Ovary (tissue), 10 donors: ENCODE measurements at regions of chr3 and their contacts with region 1.

Region 1: GRCh38 chr3:108328821-108329486 is 32.6 kb downstream of the HHLA2 start:
- DNase-seq: no peak
- H3K4me3 ChIP-seq: no peak overlapping the region
- H3K27ac ChIP-seq: no peak overlapping the region
- H3K4me1 ChIP-seq: no peaks in the 10 kb centered on the region
- H3K27me3 ChIP-seq: no peaks in the 10 kb centered on the region
- CTCF ChIP-seq: no peak
- EP300 ChIP-seq: no peak
- POLR2A ChIP-seq: no peak

Region 2: GRCh38 chr3:107212618-107213017 is 1116.3 kb before region 1 on chr3:
- intact Hi-C with region 1: loop called in 1 of 4 experiments (anchors 5 kb)
- DNase-seq: no peak
- H3K4me3 ChIP-seq: no peak overlapping the region
- H3K27ac ChIP-seq: peak overlapping the region in 1 of 2 donors; percentile 51
- H3K4me1 ChIP-seq: peaks cover 14% of the 10 kb centered on the region
- H3K27me3 ChIP-seq: no peaks in the 10 kb centered on the region
- CTCF ChIP-seq: no peak
- EP300 ChIP-seq: no peak
- POLR2A ChIP-seq: no peak

Region 3: GRCh38 chr3:108897883-108898282 is 568.9 kb after region 1 on chr3:
- intact Hi-C with region 1: no loop called
- DNase-seq: no peak
- H3K4me3 ChIP-seq: no peak overlapping the region
- H3K27ac ChIP-seq: no peak overlapping the region
- H3K4me1 ChIP-seq: no peaks in the 10 kb centered on the region
- H3K27me3 ChIP-seq: no peaks in the 10 kb centered on the region
- CTCF ChIP-seq: no peak
- EP300 ChIP-seq: no peak
- POLR2A ChIP-seq: no peak